Activated CD4-positive, alpha-beta memory T cell treated with anti-CD3 and anti-CD28 coated beads for 36 hours (primary cell): ENCODE measurements at regions of chr3 and their contacts with region 1.

Region 1: DNA sequence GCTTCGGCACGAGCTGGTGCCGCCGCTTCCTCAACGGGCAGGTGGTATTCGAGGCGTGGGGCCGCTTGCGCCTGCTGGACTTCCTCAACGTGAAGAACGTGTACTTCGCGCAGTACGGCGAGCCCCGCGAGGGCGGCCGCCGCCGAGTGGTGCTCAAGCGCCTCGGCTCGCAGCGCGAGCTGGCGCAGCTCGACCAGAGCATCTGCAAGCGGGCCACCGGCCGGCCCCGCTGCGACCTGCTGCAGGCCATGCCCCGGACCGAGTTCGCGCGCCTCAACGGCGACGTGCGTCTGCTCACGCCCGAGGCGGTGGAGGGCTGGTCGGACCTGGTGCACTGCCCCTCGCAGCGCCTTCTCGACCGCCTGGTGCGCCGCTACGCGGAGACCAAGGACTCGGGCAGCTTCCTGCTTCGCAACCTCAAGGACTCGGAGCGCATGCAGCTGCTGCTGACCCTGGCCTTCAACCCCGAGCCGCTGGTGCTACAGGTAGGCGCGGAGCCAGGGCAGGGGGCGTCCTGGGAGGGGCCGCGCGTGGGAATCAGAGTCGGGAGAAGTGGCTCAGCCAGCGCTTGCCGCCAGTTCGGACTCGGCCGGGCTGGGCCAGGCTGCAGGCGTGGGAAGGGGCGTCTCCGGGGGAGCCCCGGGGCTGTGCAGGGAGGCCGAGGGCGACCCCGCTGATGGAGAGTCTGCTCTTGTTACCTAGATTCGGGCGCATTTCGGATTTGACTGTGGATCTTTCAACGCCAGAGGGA is 1.1 kb downstream of the DIPK2A start:
- DNase-seq: peak; percentile 73
- H3K4me3 Mint-ChIP-seq: peak overlapping the region; percentile 92
- H3K27ac Mint-ChIP-seq: peak overlapping the region; percentile 96
- H3K4me1 Mint-ChIP-seq: peaks cover 22% of the 10 kb centered on the region
- H3K27me3 Mint-ChIP-seq: peaks cover 4% of the 10 kb centered on the region

Region 2: GRCh38 chr3:142595951-142596725 is 1376.5 kb before region 1 on chr3 and contains the start of gene PLS1:
- CTCF ChIA-PET with region 1: no interaction called
- POLR2A ChIA-PET with region 1: no interaction called
- intact Hi-C with region 1: loop called (anchors 10 kb)
- DNase-seq: peak; percentile 91
- H3K4me3 Mint-ChIP-seq: peak within 1 kb of the TSS; percentile 89
- H3K27ac Mint-ChIP-seq: peak within 1 kb of the TSS; percentile 63
- H3K4me1 Mint-ChIP-seq: peaks cover 10% of the 10 kb centered on the region
- H3K27me3 Mint-ChIP-seq: peaks cover 3% of the 10 kb centered on the region
- total RNA-seq, gene PLS1: 4.5 to 5.7 TPM

Region 3: DNA sequence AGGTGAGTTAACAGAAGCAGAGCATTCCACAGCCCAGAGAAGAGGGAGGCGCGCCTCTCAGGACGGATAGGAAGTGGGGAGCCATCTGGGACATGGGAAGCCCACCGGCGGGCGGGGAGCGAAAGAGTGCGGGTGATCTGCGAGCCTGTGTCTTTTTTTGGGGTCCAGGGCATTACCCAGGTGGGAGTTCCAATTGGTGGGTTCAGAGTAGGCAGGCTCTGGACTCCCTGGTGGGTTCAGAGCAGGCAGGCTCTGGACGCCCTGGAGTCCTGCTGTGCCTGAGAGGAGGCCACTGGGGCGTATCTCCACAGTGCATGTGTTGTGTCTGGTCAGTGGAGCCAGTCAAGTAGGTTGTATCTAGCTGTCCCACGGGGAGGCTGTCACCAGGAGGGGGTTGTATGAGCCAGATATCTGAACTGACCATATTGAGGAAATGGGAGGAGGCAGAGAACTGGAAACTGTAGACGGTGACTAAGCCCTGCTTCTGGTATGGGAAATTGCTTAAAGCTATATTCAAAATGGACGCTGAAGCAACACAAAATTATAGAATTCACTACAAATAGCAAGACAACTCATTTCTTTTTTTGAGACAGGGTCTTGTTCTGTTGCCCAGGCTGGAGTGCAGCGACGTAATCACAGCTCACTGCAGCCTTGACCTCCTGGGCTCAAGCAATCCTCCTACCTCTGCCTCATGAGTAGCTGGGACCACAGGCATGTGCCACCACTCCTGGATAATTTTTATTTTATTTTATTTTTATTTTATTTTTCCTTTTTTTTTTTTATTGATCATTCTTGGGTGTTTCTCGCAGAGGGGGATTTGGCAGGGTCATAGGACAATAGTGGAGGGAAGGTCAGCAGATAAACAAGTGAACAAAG is 887.6 kb before region 1 on chr3:
- CTCF ChIA-PET with region 1: no interaction called
- POLR2A ChIA-PET with region 1: no interaction called
- intact Hi-C with region 1: loop called (anchors 5 kb)
- DNase-seq: peak; percentile 36
- H3K4me3 Mint-ChIP-seq: peak overlapping the region; percentile 40
- H3K27ac Mint-ChIP-seq: no peak overlapping the region
- H3K4me1 Mint-ChIP-seq: peaks cover 34% of the 10 kb centered on the region
- H3K27me3 Mint-ChIP-seq: peaks cover 6% of the 10 kb centered on the region

Region 4: DNA sequence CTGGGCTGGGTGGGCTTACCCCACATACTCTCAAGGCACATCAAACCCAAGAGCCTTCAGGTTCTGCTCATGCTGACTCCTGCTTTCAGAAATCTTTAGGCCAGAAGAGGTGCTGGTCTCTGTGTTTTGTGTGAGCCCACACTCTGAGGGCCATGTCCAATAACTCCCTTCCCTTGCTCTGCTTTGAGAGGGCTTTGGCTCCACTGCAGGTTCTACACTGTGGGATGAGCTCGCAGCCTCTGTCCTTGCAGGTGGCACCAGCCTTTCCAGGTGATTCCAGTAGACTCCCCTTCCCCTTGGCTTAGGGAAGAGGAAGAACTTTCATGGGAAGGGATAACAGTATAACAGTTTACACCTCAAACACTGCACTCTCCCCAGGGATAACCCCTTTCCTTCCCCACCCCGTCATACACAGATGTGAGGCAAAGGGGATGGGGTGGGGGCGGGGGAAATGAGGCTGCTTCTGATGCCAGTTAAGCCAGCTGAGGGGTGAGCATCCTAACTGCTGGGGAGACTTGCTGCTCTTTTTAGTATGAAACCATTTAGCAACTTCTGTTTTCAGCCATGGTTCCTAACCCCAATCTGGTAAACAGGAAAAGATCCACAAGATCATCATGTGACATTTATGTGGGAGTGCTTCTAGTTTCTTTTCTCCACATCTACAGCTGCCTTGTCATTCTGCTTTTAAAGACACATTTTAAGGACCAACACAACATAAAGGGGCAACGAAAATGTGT is 386.8 kb before region 1 on chr3:
- CTCF ChIA-PET with region 1: no interaction called
- POLR2A ChIA-PET with region 1: no interaction called
- intact Hi-C with region 1: loop called (anchors 1 kb)
- DNase-seq: peak; percentile 48
- H3K4me3 Mint-ChIP-seq: no peak overlapping the region
- H3K27ac Mint-ChIP-seq: no peak overlapping the region
- H3K4me1 Mint-ChIP-seq: peaks cover 6% of the 10 kb centered on the region
- H3K27me3 Mint-ChIP-seq: no peaks in the 10 kb centered on the region

Region 5: DNA sequence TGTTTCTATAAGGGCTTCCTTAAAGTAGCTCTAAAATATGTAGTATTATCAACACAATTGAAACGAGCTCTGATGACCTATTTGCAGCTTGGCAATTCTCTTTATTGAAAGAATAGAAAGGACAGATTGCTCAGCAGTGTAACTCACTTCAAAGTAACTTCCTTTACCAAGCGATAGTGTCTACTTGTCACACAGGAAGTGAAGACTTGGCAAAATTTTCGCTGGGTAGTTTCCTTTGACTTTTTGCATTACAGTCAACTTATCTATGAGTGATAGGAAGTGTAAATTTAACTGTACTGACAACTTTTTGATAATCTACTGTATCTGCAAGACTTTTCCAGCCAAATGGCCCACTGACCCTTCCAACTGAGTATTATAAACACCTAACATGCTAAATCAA is 147.2 kb before region 1 on chr3:
- CTCF ChIA-PET with region 1: interaction called, 4 read pairs
- POLR2A ChIA-PET with region 1: no interaction called
- intact Hi-C with region 1: loop called (anchors 1 kb)
- DNase-seq: no peak
- H3K4me3 Mint-ChIP-seq: no peak overlapping the region
- H3K27ac Mint-ChIP-seq: peak overlapping the region; percentile 76
- H3K4me1 Mint-ChIP-seq: peaks cover 56% of the 10 kb centered on the region
- H3K27me3 Mint-ChIP-seq: no peaks in the 10 kb centered on the region

Region 6: GRCh38 chr3:144032531-144033239 is 60.0 kb after region 1 on chr3:
- CTCF ChIA-PET with region 1: interaction called, 3 read pairs
- POLR2A ChIA-PET with region 1: interaction called, 3 read pairs
- intact Hi-C with region 1: loop called (anchors 2 kb)
- DNase-seq: no peak
- H3K4me3 Mint-ChIP-seq: no peak overlapping the region
- H3K27ac Mint-ChIP-seq: no peak overlapping the region
- H3K4me1 Mint-ChIP-seq: peaks cover 6% of the 10 kb centered on the region
- H3K27me3 Mint-ChIP-seq: no peaks in the 10 kb centered on the region